ENCODE measurements at regions of chr11 and their contacts with region 1.

Region 1: DNA sequence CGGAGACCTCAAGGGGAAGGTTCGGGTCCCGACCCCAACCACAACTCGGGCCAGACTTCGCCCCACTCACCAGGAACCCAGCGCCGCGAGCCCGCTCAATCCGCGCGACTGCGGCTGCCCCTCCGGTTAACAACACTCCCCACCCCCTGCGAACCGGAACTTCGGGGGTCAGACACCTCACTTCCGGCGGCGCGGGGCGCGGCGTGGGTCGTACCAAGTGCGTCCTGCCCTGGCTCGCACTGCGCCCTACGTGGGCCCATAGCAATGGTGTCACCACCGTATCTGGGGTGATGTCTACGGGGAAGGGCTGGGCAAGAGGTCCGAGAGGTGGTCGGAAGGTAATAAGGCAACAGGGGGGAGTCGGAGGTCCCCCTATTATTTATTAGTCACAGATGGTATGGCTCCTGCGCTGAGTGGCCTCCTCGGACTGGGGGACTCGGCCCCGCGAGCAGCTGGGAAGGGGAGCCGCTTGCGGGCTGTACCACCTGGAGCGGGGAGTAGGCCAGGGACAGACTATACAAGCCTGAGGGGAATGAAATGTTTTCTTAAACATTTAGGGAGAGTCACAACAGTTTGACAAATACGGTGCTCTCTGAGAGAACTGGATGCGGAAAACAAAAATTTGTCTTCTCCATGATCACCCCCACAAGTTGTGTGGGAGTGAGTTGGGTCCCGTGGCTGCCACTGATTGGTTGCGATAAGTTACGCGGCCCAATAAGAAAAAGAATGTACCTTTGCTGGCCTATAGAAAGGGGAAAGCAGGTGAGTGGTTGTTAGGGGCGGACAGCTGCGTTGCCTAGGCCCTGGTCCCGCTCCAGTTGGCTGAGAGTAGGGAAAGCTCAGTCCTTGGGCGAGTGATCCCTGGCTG is at the start of gene SYVN1:
- DNase-seq: peak; percentile 88 to 95 (median 93)
- ATAC-seq: peak; percentile 90
- H3K4me3 ChIP-seq: peak within 1 kb of the TSS; percentile 90
- H3K4me3 Mint-ChIP-seq: peak within 1 kb of the TSS; percentile 89 to 100 (median 99)
- H3K27ac ChIP-seq: peak within 1 kb of the TSS; percentile 99
- H3K27ac Mint-ChIP-seq: peak within 1 kb of the TSS; percentile 97 to 100 (median 99)
- H3K4me1 ChIP-seq: peaks cover 10 to 21% of the 10 kb centered on the region in 2 donors
- H3K4me1 Mint-ChIP-seq: peaks cover 31 to 50% (median 40%) of the 10 kb centered on the region in 7 donors
- H3K27me3 ChIP-seq: no peaks in the 10 kb centered on the region
- H3K27me3 Mint-ChIP-seq: no peaks in the 10 kb centered on the region
- total RNA-seq, gene SYVN1: 61.0 to 84.6 (median 67.9) TPM

Region 2: GRCh38 chr11:64916775-64917662 is 217.6 kb before region 1 on chr11 and contains the start of gene ATG2A:
- CTCF ChIA-PET with region 1: no interaction called
- POLR2A ChIA-PET with region 1: interaction called, 3 read pairs
- intact Hi-C with region 1: loop called in 1 of 2 experiments (anchors 1 kb)
- DNase-seq: peak; percentile 95 to 100 (median 99)
- ATAC-seq: peak; percentile 97
- H3K4me3 ChIP-seq: peak within 1 kb of the TSS; percentile 92
- H3K4me3 Mint-ChIP-seq: peak within 1 kb of the TSS; percentile 88 to 98 (median 91)
- H3K27ac ChIP-seq: peak within 1 kb of the TSS; percentile 83
- H3K27ac Mint-ChIP-seq: peak within 1 kb of the TSS; percentile 81 to 99 (median 91)
- H3K4me1 ChIP-seq: peaks cover 18 to 22% of the 10 kb centered on the region in 2 donors
- H3K4me1 Mint-ChIP-seq: peaks cover 14 to 33% (median 25%) of the 10 kb centered on the region in 7 donors
- H3K27me3 ChIP-seq: no peaks in the 10 kb centered on the region
- H3K27me3 Mint-ChIP-seq: no peaks in the 10 kb centered on the region
- total RNA-seq, gene ATG2A: 30.6 to 105 (median 36.2) TPM

Region 3: GRCh38 chr11:65027213-65028067 is 107.2 kb before region 1 on chr11 and contains the start of gene SNX15:
- CTCF ChIA-PET with region 1: no interaction called
- POLR2A ChIA-PET with region 1: interaction called, 8 read pairs
- intact Hi-C with region 1: loop called in 1 of 2 experiments (anchors 1 kb)
- DNase-seq: peak; percentile 61 to 95 (median 94)
- ATAC-seq: peak; percentile 97
- H3K4me3 ChIP-seq: peak within 1 kb of the TSS; percentile 41
- H3K4me3 Mint-ChIP-seq: peak within 1 kb of the TSS; percentile 66 to 91 (median 83)
- H3K27ac ChIP-seq: peak within 1 kb of the TSS; percentile 59
- H3K27ac Mint-ChIP-seq: peak within 1 kb of the TSS; percentile 59 to 95 (median 87)
- H3K4me1 ChIP-seq: peaks cover 9 to 14% of the 10 kb centered on the region in 2 donors
- H3K4me1 Mint-ChIP-seq: peaks cover 12 to 24% (median 21%) of the 10 kb centered on the region in 7 donors
- H3K27me3 ChIP-seq: no peaks in the 10 kb centered on the region
- H3K27me3 Mint-ChIP-seq: no peaks in the 10 kb centered on the region
- total RNA-seq, gene SNX15: 13.1 to 29.0 (median 21.7) TPM

Region 4: GRCh38 chr11:65095974-65096806 is 38.4 kb before region 1 on chr11 and contains the start of gene VPS51:
- CTCF ChIA-PET with region 1: no interaction called
- POLR2A ChIA-PET with region 1: interaction called, 40 read pairs
- intact Hi-C with region 1: loop called (anchors 1 kb)
- DNase-seq: peak; percentile 71 to 92 (median 87)
- ATAC-seq: peak; percentile 93
- H3K4me3 ChIP-seq: peak within 1 kb of the TSS; percentile 92
- H3K4me3 Mint-ChIP-seq: peak within 1 kb of the TSS; percentile 83 to 97 (median 94)
- H3K27ac ChIP-seq: peak within 1 kb of the TSS; percentile 88
- H3K27ac Mint-ChIP-seq: peak within 1 kb of the TSS; percentile 89 to 98 (median 97)
- H3K4me1 ChIP-seq: peaks cover 9 to 15% of the 10 kb centered on the region in 2 donors
- H3K4me1 Mint-ChIP-seq: peaks cover 8 to 28% (median 19%) of the 10 kb centered on the region in 7 donors
- H3K27me3 ChIP-seq: no peaks in the 10 kb centered on the region
- H3K27me3 Mint-ChIP-seq: no peaks in the 10 kb centered on the region
- total RNA-seq, gene VPS51: 159 to 269 (median 256) TPM

Region 5: GRCh38 chr11:65147352-65148075 is 12.9 kb after region 1 on chr11:
- CTCF ChIA-PET with region 1: interaction called, 3 read pairs
- POLR2A ChIA-PET with region 1: interaction called, 29 read pairs
- intact Hi-C with region 1: no loop called
- DNase-seq: no peak
- ATAC-seq: no peak
- H3K4me3 ChIP-seq: no peak overlapping the region
- H3K4me3 Mint-ChIP-seq: no peak overlapping the region
- H3K27ac ChIP-seq: no peak overlapping the region
- H3K27ac Mint-ChIP-seq: no peak overlapping the region
- H3K4me1 ChIP-seq: no peaks in the 10 kb centered on the region
- H3K4me1 Mint-ChIP-seq: peaks cover 0 to 10% (median 0%) of the 10 kb centered on the region in 7 donors
- H3K27me3 ChIP-seq: no peaks in the 10 kb centered on the region
- H3K27me3 Mint-ChIP-seq: peaks cover 0 to 17% (median 0%) of the 10 kb centered on the region in 5 donors

Region 6: DNA sequence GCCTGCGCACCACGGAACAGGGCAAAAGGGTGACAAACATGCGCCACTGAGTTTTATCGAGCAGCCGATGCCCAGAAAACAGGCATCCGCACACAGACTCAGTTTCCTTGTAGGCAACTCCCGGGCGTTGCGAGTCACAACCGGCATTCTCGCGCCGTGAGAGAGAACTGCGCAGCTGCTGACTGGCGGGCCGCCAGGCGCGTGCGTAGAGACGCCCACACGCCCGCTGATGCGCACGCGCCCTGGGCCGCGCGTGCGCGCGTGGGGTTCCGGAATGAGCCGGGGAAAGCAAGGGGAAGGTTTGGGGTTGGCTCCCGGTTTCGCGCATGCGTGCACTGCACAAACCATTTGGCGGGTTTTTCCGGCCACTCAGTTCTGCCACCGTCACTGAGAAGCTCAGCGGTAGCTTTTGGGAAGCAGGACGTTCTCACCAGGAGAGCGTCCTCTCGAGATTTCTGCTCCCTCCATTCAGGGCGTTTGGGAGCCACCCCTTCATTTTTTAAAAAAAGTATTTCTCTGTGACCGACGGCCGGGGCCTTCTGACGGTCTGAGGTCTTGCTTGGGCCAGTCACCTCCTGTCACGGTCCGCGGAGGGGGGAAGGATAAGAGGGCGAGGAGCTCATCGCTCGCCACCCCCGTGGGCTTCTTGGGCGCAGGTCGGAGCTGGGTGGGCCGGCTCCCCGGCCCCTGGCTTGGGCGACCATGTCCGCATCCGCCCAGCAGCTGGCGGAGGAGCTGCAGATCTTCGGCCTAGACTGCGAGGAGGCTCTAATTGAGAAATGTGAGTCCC is 127.2 kb after region 1 on chr11 and contains the start of gene POLA2:
- CTCF ChIA-PET with region 1: no interaction called
- POLR2A ChIA-PET with region 1: interaction called, 6 read pairs
- intact Hi-C with region 1: loop called in 1 of 2 experiments (anchors 1 kb)
- DNase-seq: peak; percentile 94 to 99 (median 98)
- ATAC-seq: peak; percentile 96
- H3K4me3 ChIP-seq: peak within 1 kb of the TSS; percentile 88
- H3K4me3 Mint-ChIP-seq: peak within 1 kb of the TSS; percentile 83 to 95 (median 92)
- H3K27ac ChIP-seq: peak within 1 kb of the TSS; percentile 88
- H3K27ac Mint-ChIP-seq: peak within 1 kb of the TSS; percentile 91 to 98 (median 97)
- H3K4me1 ChIP-seq: peaks cover 9 to 18% of the 10 kb centered on the region in 2 donors
- H3K4me1 Mint-ChIP-seq: peaks cover 20 to 62% (median 50%) of the 10 kb centered on the region in 7 donors
- H3K27me3 ChIP-seq: no peaks in the 10 kb centered on the region
- H3K27me3 Mint-ChIP-seq: peaks cover 0 to 2% (median 0%) of the 10 kb centered on the region in 5 donors
- total RNA-seq, gene POLA2: 13.4 to 51.6 (median 27.8) TPM

Region 7: DNA sequence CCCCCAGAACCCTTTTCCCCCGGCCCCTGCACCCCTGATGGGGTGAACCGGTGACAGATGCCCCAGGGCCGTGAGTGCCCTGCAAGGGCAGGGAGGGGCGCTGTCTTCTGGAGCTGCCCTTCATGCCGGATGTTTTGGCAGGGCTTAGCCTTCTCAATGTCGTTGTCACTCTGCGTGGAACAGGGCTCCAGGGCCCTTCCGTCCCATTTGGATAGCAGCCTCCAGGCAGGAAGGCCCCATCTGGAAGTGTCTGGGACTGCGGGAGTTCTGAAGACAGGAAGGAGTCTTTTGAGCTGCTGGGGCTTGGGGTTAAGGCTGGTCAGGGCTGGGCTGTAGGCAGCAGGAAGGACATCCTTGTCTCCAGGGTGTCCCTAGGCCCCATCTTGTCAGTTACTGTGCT is 256.4 kb after region 1 on chr11:
- CTCF ChIA-PET with region 1: no interaction called
- POLR2A ChIA-PET with region 1: no interaction called
- intact Hi-C with region 1: no loop called
- DNase-seq: no peak
- ATAC-seq: no peak
- H3K4me3 ChIP-seq: no peak overlapping the region
- H3K4me3 Mint-ChIP-seq: peak overlapping the region in 4 of 10 donors; percentile 12 to 26 (median 20)
- H3K27ac ChIP-seq: no peak overlapping the region
- H3K27ac Mint-ChIP-seq: peak overlapping the region in 1 of 9 donors; percentile 29
- H3K4me1 ChIP-seq: peaks cover 32 to 36% of the 10 kb centered on the region in 2 donors
- H3K4me1 Mint-ChIP-seq: peaks cover 31 to 46% (median 36%) of the 10 kb centered on the region in 7 donors
- H3K27me3 ChIP-seq: no peaks in the 10 kb centered on the region
- H3K27me3 Mint-ChIP-seq: no peaks in the 10 kb centered on the region

Region 8: GRCh38 chr11:66045177-66045639 is 910.6 kb after region 1 on chr11:
- CTCF ChIA-PET with region 1: no interaction called
- POLR2A ChIA-PET with region 1: no interaction called
- intact Hi-C with region 1: no loop called
- DNase-seq: peak; percentile 70 to 89 (median 81)
- ATAC-seq: peak; percentile 98
- H3K4me3 ChIP-seq: no peak overlapping the region
- H3K4me3 Mint-ChIP-seq: peak overlapping the region in 3 of 10 donors; percentile 12 to 29 (median 17)
- H3K27ac ChIP-seq: no peak overlapping the region
- H3K27ac Mint-ChIP-seq: peak overlapping the region in 2 of 9 donors; percentile 17 to 34
- H3K4me1 ChIP-seq: peaks cover 0 to 9% of the 10 kb centered on the region in 2 donors
- H3K4me1 Mint-ChIP-seq: peaks cover 4 to 23% (median 15%) of the 10 kb centered on the region in 7 donors
- H3K27me3 ChIP-seq: no peaks in the 10 kb centered on the region
- H3K27me3 Mint-ChIP-seq: peaks cover 0 to 19% (median 0%) of the 10 kb centered on the region in 5 donors